A549 (cell line): ENCODE measurements at regions of chr5 and their contacts with region 1.

Region 1: GRCh38 chr5:171484460-171484899 is 65.0 kb downstream of the FGF18 start:
- DNase-seq: peak; percentile 26 to 73
- ATAC-seq: peak; percentile 46 to 82; a peak in 4 of 6 replicates
- H3K4me3 ChIP-seq: no peak overlapping the region
- H3K27ac ChIP-seq: no peak overlapping the region
- H3K4me1 ChIP-seq: peaks cover 6% of the 10 kb centered on the region; the same call in 1 of the 3 replicates
- CTCF ChIP-seq: peak; percentile 76
- EP300 ChIP-seq: no peak
- POLR2A ChIP-seq: no peak
- RAD21 ChIP-seq: peak; percentile 59 to 63

Region 2: DNA sequence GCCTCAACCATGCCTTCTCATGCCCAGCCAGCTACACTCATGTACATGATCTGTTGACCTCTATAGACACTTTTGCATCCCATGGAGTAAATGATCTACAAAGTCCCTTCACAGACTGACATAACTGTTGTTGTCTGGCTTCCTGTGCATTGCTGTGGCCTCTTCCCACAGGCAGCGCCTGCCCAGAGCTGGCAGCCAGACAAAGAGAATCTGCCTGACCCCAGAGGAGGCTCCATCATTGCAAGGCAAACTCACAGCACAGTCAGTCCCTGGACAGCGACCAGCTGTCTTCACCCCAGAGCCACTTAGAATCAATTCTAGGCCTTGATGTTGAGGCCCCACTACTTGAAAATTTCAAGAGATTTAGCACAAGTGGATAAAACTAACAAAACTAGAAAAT is 1569.7 kb before region 1 on chr5:
- CTCF ChIA-PET with region 1: no interaction called
- POLR2A ChIA-PET with region 1: no interaction called
- DNase-seq: no peak
- ATAC-seq: no peak
- H3K4me3 ChIP-seq: no peak overlapping the region
- H3K27ac ChIP-seq: no peak overlapping the region
- H3K4me1 ChIP-seq: no peaks in the 10 kb centered on the region
- CTCF ChIP-seq: no peak
- EP300 ChIP-seq: no peak
- POLR2A ChIP-seq: no peak
- RAD21 ChIP-seq: no peak

Region 3: GRCh38 chr5:171474230-171474813 is 10.2 kb before region 1 on chr5:
- CTCF ChIA-PET with region 1: interaction called, 35 read pairs
- POLR2A ChIA-PET with region 1: no interaction called
- DNase-seq: no peak
- ATAC-seq: no peak
- H3K4me3 ChIP-seq: no peak overlapping the region
- H3K27ac ChIP-seq: no peak overlapping the region
- H3K4me1 ChIP-seq: no peaks in the 10 kb centered on the region
- CTCF ChIP-seq: no peak
- EP300 ChIP-seq: no peak
- POLR2A ChIP-seq: no peak
- RAD21 ChIP-seq: no peak

Region 4: GRCh38 chr5:171495122-171495700 is 10.7 kb after region 1 on chr5:
- CTCF ChIA-PET with region 1: interaction called, 13 read pairs
- POLR2A ChIA-PET with region 1: no interaction called
- DNase-seq: no peak
- ATAC-seq: peak; percentile 10 to 30; a peak in 2 of 6 replicates
- H3K4me3 ChIP-seq: no peak overlapping the region
- H3K27ac ChIP-seq: peak overlapping the region; percentile 61 to 85
- H3K4me1 ChIP-seq: peaks cover 15% of the 10 kb centered on the region
- CTCF ChIP-seq: no peak
- EP300 ChIP-seq: no peak
- POLR2A ChIP-seq: no peak
- RAD21 ChIP-seq: no peak

Region 5: DNA sequence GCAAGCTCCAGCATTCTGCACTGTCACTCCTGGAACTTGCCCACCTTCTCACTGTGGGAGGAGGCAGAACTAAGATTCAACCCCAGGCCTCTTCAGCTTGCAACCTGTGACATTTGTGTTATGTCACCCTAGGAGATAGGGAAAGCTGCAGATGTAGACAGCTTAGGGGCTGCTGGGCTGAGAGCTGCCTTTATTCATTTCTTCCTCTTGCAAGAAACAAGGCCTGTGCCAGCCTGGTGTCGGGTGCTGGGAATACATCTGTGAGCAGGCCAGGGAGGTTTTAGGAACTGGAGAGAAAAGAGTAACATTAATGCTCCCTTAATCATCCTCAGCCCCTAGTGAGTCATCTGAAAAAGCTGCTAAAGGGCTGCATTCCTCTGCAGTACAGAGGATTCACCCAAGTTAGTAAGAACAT is 36.7 kb after region 1 on chr5:
- CTCF ChIA-PET with region 1: interaction called, 21 read pairs
- POLR2A ChIA-PET with region 1: no interaction called
- DNase-seq: peak; percentile 71 to 89
- ATAC-seq: peak; percentile 95
- H3K4me3 ChIP-seq: no peak overlapping the region
- H3K27ac ChIP-seq: peak overlapping the region; percentile 85 to 90
- H3K4me1 ChIP-seq: peaks cover 26% of the 10 kb centered on the region
- CTCF ChIP-seq: no peak
- EP300 ChIP-seq: no peak
- POLR2A ChIP-seq: no peak
- RAD21 ChIP-seq: no peak

Region 6: DNA sequence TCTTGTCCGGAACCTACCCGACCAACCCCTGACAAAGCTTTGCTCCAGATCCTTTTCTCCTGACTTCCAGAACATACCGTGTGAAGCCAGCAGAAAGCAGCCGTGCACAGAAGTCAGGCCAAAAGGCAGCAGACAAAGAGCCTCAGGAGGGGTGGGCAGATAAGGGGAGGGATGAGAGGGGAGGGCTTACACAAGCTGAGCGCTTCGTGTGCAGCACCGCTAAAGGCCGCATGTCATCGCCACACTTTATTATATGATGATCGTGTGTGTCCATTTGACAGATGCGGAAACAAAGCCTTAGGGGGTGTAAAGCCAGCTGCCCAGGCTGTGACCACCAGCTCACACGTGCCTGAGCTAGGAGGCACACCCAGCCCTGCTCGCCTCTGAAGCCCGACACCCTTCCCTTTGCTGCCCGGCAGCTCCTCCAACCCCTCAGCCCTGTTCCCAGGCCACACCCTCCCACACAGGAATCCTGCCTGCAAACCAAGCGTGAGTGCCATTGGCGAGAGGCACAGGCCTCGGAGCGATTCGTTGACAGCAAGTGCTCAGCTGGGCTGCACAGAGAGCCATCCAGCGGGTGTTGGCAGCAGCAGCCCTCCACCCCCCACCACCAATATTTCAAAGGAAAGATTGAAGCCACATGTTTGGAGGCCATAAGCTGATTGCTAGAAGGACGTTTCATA is 130.6 kb after region 1 on chr5:
- CTCF ChIA-PET with region 1: interaction called, 12 read pairs
- POLR2A ChIA-PET with region 1: no interaction called
- DNase-seq: no peak
- ATAC-seq: no peak
- H3K4me3 ChIP-seq: no peak overlapping the region
- H3K27ac ChIP-seq: no peak overlapping the region
- H3K4me1 ChIP-seq: no peaks in the 10 kb centered on the region
- CTCF ChIP-seq: no peak
- EP300 ChIP-seq: no peak
- POLR2A ChIP-seq: no peak
- RAD21 ChIP-seq: no peak